ENCODE measurements at regions of chr16 and their contacts with region 1.

Region 1: DNA sequence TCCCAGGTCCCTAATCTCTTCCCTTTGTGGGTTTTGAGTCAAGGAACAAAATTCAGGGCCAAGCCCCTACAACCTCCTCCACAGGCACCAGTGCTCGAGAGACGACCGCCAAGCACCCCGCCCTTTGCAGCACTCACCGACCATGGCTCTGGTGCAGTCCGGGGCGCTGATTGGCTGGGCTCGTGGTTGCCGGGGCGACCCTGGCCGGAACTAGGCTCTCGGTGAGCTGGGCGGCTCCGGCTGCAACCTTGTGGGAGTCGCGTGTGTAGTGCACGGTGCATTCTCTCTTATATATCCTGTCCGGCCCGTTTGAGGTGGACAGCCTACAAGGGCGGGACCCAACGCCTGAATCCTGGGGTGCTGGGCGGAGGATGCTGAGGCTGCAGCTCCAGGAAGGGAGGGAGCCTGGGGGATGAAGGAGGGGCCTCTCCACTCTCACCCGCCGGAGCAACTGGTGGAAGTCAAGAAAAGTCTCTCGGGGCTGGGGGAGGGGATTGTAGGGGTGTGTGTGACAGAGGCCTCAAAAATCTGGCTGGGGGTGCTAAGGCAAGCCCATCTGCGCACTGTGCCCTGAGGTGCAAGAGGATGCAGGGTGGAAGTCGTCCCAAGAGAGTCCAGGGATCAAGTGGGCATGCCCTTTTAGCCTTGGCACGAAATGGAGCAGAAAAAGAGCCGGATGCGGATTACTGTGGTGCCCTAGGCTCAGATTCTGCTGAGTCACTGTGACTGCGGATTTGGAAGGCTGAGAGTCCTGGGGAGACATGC is at the start of gene NQO1:
- DNase-seq: peak; percentile 95 to 98 (median 96)
- ATAC-seq: peak; percentile 94
- H3K4me3 ChIP-seq: peak within 1 kb of the TSS; percentile 52
- H3K27ac ChIP-seq: peak within 1 kb of the TSS; percentile 97
- H3K4me1 ChIP-seq: peaks cover 26 to 44% of the 10 kb centered on the region in 2 experiments; a peak in 4 of 5 replicates
- H3K27me3 ChIP-seq: no peaks in the 10 kb centered on the region; a peak in 1 of 5 replicates
- CTCF ChIP-seq: 0 out of 6 replicates have a peak, but pooled peaks of 1 of the 3 experiments have one; percentile 1
- EP300 ChIP-seq: peak; percentile 24
- POLR2A ChIP-seq: peak; percentile 89
- RAD21 ChIP-seq: no peak
- polyA plus RNA-seq, gene NQO1: 96.7 to 152 TPM

Region 2: GRCh38 chr16:69741919-69742904 is 15.7 kb after region 1 on chr16:
- CTCF ChIA-PET with region 1: no interaction called
- POLR2A ChIA-PET with region 1: interaction called, 66 read pairs
- in situ Hi-C with region 1: no loop called
- intact Hi-C with region 1: no loop called
- DNase-seq: no peak
- ATAC-seq: no peak
- H3K4me3 ChIP-seq: no peak overlapping the region
- H3K27ac ChIP-seq: no peak overlapping the region
- H3K4me1 ChIP-seq: no peaks in the 10 kb centered on the region
- H3K27me3 ChIP-seq: no peaks in the 10 kb centered on the region
- CTCF ChIP-seq: no peak
- EP300 ChIP-seq: no peak
- POLR2A ChIP-seq: no peak
- RAD21 ChIP-seq: no peak

Region 3: GRCh38 chr16:69754469-69755310 is 28.2 kb after region 1 on chr16 and contains the start of gene NOB1:
- CTCF ChIA-PET with region 1: no interaction called
- POLR2A ChIA-PET with region 1: interaction called, 56 read pairs
- in situ Hi-C with region 1: no loop called
- intact Hi-C with region 1: loop called (anchors 1 kb)
- DNase-seq: peak; percentile 94 to 98 (median 95)
- ATAC-seq: peak; percentile 97
- H3K4me3 ChIP-seq: peak within 1 kb of the TSS; percentile 95
- H3K27ac ChIP-seq: peak within 1 kb of the TSS; percentile 84
- H3K4me1 ChIP-seq: peaks cover 5 to 14% of the 10 kb centered on the region in 2 experiments; a peak in 4 of 5 replicates
- H3K27me3 ChIP-seq: no peaks in the 10 kb centered on the region
- CTCF ChIP-seq: peak; percentile 96 to 98 (median 98)
- EP300 ChIP-seq: no peak
- POLR2A ChIP-seq: peak; percentile 98
- RAD21 ChIP-seq: peak; percentile 97 to 98
- polyA plus RNA-seq, gene NOB1: 42.4 to 139 TPM

Region 4: GRCh38 chr16:69773260-69773947 is 46.9 kb after region 1 on chr16:
- CTCF ChIA-PET with region 1: no interaction called
- POLR2A ChIA-PET with region 1: no interaction called
- in situ Hi-C with region 1: no loop called
- intact Hi-C with region 1: no loop called
- DNase-seq: peak in 1 of 4 experiments; percentile 25
- ATAC-seq: peak; percentile 45
- H3K4me3 ChIP-seq: no peak overlapping the region
- H3K27ac ChIP-seq: no peak overlapping the region
- H3K4me1 ChIP-seq: peaks cover 6 to 9% of the 10 kb centered on the region in 2 experiments; a peak in 4 of 5 replicates
- H3K27me3 ChIP-seq: no peaks in the 10 kb centered on the region
- CTCF ChIP-seq: no peak
- EP300 ChIP-seq: no peak
- POLR2A ChIP-seq: no peak
- RAD21 ChIP-seq: no peak

Measured in K562 (cell line).